ENCODE measurements at regions of chr7 and their contacts with region 1.

Region 1: DNA sequence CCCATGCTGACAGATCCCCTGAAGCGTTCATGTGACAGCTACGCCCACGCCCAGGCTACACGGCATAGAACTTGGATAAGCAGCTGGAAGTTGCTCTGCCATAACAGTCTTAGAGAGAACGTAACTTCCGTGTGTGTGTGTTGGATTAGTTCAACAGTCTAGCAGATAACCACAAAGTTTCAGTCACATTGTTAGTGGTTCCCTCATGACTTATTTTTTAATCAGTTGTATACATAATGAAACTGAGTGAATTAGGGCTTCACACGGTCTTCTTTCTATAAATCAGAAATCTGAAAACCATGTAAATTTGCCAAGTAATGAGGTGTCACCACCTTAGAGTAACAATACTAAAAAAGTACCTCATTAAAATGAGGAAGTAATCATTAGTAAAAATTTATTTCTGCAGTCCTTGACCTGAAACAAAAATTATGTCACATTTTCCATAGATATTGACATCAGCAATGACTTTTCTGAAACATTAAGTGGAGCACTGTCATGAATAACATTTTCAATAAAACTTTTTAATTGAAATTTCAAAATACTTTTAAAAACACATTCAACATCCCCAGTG is 21.7 kb upstream of the MACC1 start:
- DNase-seq: peak; percentile 98
- ATAC-seq: peak; percentile 72
- H3K4me3 ChIP-seq: peak overlapping the region; percentile 35; the same call in 1 of the 2 replicates
- H3K27ac ChIP-seq: peak overlapping the region; percentile 76
- H3K4me1 ChIP-seq: peaks cover 49% of the 10 kb centered on the region
- H3K27me3 ChIP-seq: no peaks in the 10 kb centered on the region
- CTCF ChIP-seq: no peak
- EP300 ChIP-seq: peak; percentile 99 to 100
- POLR2A ChIP-seq: peak; percentile 29; the same call in 1 of the 2 replicates
- RAD21 ChIP-seq: no peak

Region 2: GRCh38 chr7:20064974-20065862 is 173.6 kb before region 1 on chr7:
- CTCF ChIA-PET with region 1: no interaction called
- POLR2A ChIA-PET with region 1: no interaction called
- RAD21 ChIA-PET with region 1: no interaction called
- SMC1A ChIA-PET with region 1: no interaction called
- in situ Hi-C with region 1: no loop called
- intact Hi-C with region 1: no loop called
- DNase-seq: peak; percentile 57
- ATAC-seq: peak; percentile 100
- H3K4me3 ChIP-seq: no peak overlapping the region
- H3K27ac ChIP-seq: no peak overlapping the region
- H3K4me1 ChIP-seq: peaks cover 11% of the 10 kb centered on the region
- H3K27me3 ChIP-seq: no peaks in the 10 kb centered on the region
- CTCF ChIP-seq: no peak
- EP300 ChIP-seq: no peak
- POLR2A ChIP-seq: no peak
- RAD21 ChIP-seq: no peak

Region 3: DNA sequence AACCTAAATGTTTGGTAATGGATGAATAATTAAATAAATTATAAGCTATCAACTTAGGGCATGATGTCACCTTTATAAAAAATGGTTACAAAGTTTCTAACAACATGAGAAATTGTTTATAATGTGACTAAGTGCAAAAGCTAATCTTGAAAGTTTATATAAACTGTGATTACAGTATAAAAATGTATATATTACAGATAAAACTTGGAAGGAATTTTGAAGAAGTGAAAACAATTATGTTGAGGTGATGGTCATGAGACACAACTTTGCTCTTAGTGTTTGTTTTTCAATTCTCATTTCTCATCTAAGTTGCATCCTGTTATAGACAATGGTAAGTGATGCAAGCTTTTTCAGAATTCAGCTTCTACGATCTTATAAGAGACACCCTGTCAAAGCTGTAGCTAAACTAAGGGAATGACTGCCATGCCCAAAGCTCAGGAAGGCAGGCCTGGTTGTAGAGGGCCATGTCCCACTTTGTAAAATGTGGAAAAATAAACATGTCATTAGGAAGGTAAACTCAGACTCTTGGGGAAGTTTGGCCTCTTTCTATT is 45.5 kb before region 1 on chr7:
- CTCF ChIA-PET with region 1: interaction called, 5 read pairs
- POLR2A ChIA-PET with region 1: interaction called, 9 read pairs
- RAD21 ChIA-PET with region 1: interaction called, 14 read pairs
- SMC1A ChIA-PET with region 1: interaction called, 12 read pairs
- in situ Hi-C with region 1: no loop called
- intact Hi-C with region 1: loop called (anchors 2 kb)
- DNase-seq: no peak
- ATAC-seq: peak; percentile 83
- H3K4me3 ChIP-seq: no peak overlapping the region
- H3K27ac ChIP-seq: peak overlapping the region; percentile 63
- H3K4me1 ChIP-seq: peaks cover 24% of the 10 kb centered on the region
- H3K27me3 ChIP-seq: no peaks in the 10 kb centered on the region
- CTCF ChIP-seq: no peak
- EP300 ChIP-seq: peak; percentile 48 to 58; a peak in 2 of 4 replicates
- POLR2A ChIP-seq: no peak
- RAD21 ChIP-seq: no peak

Region 4: DNA sequence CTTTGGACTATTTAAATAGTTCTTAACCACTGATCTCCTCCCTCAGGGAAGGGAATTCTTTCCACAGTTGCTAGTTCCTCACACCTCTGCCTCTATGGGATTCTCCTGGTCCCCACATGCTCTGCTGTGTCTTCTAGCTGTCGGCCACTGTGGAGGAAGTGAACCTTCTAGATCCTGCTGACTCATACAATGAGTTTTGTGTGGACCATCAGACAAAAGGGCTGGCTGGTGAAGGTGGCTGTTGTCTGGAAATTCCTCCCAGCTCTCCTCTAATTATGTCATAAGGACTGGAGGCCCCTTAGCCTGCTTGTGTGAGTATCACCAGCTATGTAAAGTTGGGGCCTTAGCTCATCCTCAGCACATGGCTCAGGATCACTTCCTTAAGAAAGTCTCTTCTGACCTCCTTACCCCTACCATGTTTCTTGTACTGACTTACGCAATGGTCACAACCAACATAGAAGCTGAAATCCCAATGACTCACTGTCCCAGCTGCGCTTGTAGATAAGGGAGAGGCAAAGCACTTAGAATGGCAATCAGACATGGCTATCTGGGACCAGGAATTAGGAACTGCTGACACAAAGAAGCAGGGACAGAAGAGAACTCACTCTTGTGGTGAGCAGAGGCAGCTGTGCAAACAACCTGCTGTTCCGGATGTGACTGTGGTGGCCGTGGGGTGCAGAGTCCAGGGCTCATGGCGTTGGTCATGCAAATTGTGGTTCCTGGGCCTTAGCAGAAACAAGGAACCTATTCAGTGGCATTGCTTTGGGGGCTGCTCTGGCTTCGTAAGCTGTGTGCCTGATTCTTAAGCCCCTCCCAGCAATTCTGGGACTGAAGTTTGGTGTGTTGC is 19.2 kb before region 1 on chr7:
- CTCF ChIA-PET with region 1: interaction called, 159 read pairs
- POLR2A ChIA-PET with region 1: interaction called, 151 read pairs
- RAD21 ChIA-PET with region 1: interaction called, 230 read pairs
- SMC1A ChIA-PET with region 1: interaction called, 474 read pairs
- in situ Hi-C with region 1: no loop called
- intact Hi-C with region 1: loop called (anchors 1 kb)
- DNase-seq: peak; percentile 99
- ATAC-seq: peak; percentile 72
- H3K4me3 ChIP-seq: peak overlapping the region; percentile 44; the same call in 1 of the 2 replicates
- H3K27ac ChIP-seq: peak overlapping the region; percentile 98
- H3K4me1 ChIP-seq: peaks cover 35% of the 10 kb centered on the region
- H3K27me3 ChIP-seq: no peaks in the 10 kb centered on the region
- CTCF ChIP-seq: peak in 1 of 3 experiments; percentile 14; a peak in 1 of 6 replicates
- EP300 ChIP-seq: peak; percentile 99 to 100
- POLR2A ChIP-seq: peak; percentile 74
- RAD21 ChIP-seq: peak; percentile 19; the same call in 1 of the 2 replicates

Region 5: GRCh38 chr7:20270867-20271266 is 32.0 kb after region 1 on chr7:
- CTCF ChIA-PET with region 1: interaction called, 12 read pairs
- POLR2A ChIA-PET with region 1: interaction called, 9 read pairs
- RAD21 ChIA-PET with region 1: interaction called, 35 read pairs
- SMC1A ChIA-PET with region 1: interaction called, 44 read pairs
- in situ Hi-C with region 1: no loop called
- intact Hi-C with region 1: loop called (anchors 2 kb)
- DNase-seq: peak; percentile 74
- ATAC-seq: peak; percentile 90
- H3K4me3 ChIP-seq: no peak overlapping the region
- H3K27ac ChIP-seq: peak overlapping the region; percentile 73
- H3K4me1 ChIP-seq: peaks cover 17% of the 10 kb centered on the region
- H3K27me3 ChIP-seq: no peaks in the 10 kb centered on the region
- CTCF ChIP-seq: no peak
- EP300 ChIP-seq: no peak
- POLR2A ChIP-seq: no peak
- RAD21 ChIP-seq: no peak

Region 6: DNA sequence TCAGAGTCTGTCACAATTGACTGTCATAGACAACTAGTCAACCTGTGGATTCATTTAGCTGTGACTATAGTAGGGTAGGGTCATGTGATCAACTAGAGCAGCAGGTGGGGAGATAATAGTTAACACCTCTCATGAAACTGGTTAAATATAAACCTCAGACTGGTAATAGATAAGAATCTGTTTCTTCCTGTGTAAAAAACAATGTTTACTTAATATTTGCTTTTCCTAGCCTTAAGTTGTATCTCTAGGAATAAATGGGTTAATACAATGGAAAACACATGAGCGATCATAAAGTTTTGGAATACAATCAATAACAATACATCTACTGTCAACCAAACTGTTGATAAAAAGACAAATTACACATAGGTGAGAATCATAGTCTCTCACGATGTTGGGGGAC is 48.5 kb after region 1 on chr7:
- CTCF ChIA-PET with region 1: interaction called, 5 read pairs
- POLR2A ChIA-PET with region 1: interaction called, 20 read pairs
- RAD21 ChIA-PET with region 1: interaction called, 89 read pairs
- SMC1A ChIA-PET with region 1: interaction called, 139 read pairs
- in situ Hi-C with region 1: loop called (anchors 5 kb)
- intact Hi-C with region 1: loop called (anchors 1 kb)
- DNase-seq: no peak
- ATAC-seq: peak; percentile 52
- H3K4me3 ChIP-seq: no peak overlapping the region
- H3K27ac ChIP-seq: no peak overlapping the region
- H3K4me1 ChIP-seq: peaks cover 19% of the 10 kb centered on the region
- H3K27me3 ChIP-seq: no peaks in the 10 kb centered on the region
- CTCF ChIP-seq: no peak
- EP300 ChIP-seq: peak; percentile 53 to 74; a peak in 3 of 4 replicates
- POLR2A ChIP-seq: no peak
- RAD21 ChIP-seq: no peak

Region 7: GRCh38 chr7:21352540-21353387 is 1113.9 kb after region 1 on chr7:
- CTCF ChIA-PET with region 1: no interaction called
- POLR2A ChIA-PET with region 1: no interaction called
- RAD21 ChIA-PET with region 1: no interaction called
- SMC1A ChIA-PET with region 1: no interaction called
- in situ Hi-C with region 1: loop called (anchors 25 kb)
- intact Hi-C with region 1: no loop called
- DNase-seq: peak; percentile 93
- ATAC-seq: peak; percentile 86
- H3K4me3 ChIP-seq: peak overlapping the region; percentile 43
- H3K27ac ChIP-seq: peak overlapping the region; percentile 85
- H3K4me1 ChIP-seq: peaks cover 38% of the 10 kb centered on the region
- H3K27me3 ChIP-seq: no peaks in the 10 kb centered on the region
- CTCF ChIP-seq: no peak
- EP300 ChIP-seq: peak; percentile 23 to 83; a peak in 3 of 4 replicates
- POLR2A ChIP-seq: no peak
- RAD21 ChIP-seq: peak; percentile 30; the same call in 1 of the 2 replicates

Measured in GM12878 (cell line).